ENCODE measurements at regions of chr6 and their contacts with region 1.

Region 1: DNA sequence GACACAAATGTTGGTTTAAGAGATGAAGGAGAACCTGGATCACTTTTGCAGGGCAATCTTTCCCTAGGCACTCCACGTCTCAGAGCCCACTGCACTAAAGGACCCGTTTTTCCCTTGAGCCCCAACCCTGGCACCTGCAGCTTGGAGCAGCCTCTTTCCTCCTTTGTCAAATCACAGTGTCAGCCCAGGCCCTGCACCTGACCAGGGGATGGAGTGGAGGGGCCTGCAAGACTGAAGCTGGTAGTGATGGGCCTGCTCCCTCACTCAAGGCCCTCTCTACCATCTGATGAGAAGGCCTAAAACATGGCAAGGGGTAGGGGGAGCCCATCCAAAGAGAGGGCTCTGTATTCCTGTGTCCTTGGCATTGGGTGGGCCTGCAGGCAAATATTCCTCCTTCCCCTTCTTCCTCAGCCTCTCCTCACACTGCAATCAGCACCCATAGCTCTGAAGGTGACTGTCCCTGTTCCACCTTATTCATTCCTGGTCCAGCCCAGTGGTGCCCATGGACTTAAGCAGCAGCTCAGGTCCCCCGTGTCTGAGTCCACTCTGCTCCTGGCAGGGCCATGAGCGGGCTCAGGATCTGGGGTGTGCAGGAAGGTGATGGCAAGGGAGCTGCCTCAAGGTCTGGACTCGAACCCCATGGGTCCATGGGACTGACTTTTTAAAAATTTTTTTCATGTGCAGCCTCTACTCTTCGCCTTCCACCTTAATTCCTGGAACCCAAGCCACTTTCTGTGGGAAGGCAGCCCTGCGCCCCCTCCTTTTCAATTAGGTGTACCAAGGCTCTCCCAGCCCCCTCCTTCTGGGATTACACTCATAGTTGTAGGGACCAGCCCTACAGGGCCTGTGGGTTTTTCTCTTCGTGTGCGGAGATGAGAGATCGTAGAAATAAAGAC is 6.7 kb downstream of the RAET1G start:
- DNase-seq: no peak
- ATAC-seq: no peak
- H3K4me3 ChIP-seq: no peak overlapping the region
- H3K27ac ChIP-seq: no peak overlapping the region
- H3K4me1 ChIP-seq: no peaks in the 10 kb centered on the region; a peak in 2 of 5 replicates
- H3K27me3 ChIP-seq: peaks cover 13 to 57% of the 10 kb centered on the region in 2 experiments; a peak in 4 of 5 replicates
- CTCF ChIP-seq: no peak
- EP300 ChIP-seq: no peak
- POLR2A ChIP-seq: no peak
- RAD21 ChIP-seq: no peak

Region 2: GRCh38 chr6:149903938-149904611 is 12.1 kb before region 1 on chr6:
- CTCF ChIA-PET with region 1: no interaction called
- POLR2A ChIA-PET with region 1: interaction called, 10 read pairs
- in situ Hi-C with region 1: no loop called
- intact Hi-C with region 1: no loop called
- DNase-seq: no peak
- ATAC-seq: peak; percentile 49; the same call in 2 of the 3 replicates
- H3K4me3 ChIP-seq: no peak overlapping the region
- H3K27ac ChIP-seq: no peak overlapping the region
- H3K4me1 ChIP-seq: peaks cover 0 to 6% of the 10 kb centered on the region in 2 experiments; a peak in 1 of 5 replicates
- H3K27me3 ChIP-seq: peaks cover 26 to 63% of the 10 kb centered on the region in 2 experiments
- CTCF ChIP-seq: no peak
- EP300 ChIP-seq: no peak
- POLR2A ChIP-seq: no peak
- RAD21 ChIP-seq: 0 out of 4 replicates have a peak, but pooled peaks of 1 of the 2 experiments have one; percentile 14